H1 (cell line): ENCODE measurements at regions of chr3 and their contacts with region 1.

Region 1: GRCh38 chr3:56988458-56989168 is 71.9 kb upstream of the SPATA12 start:
- DNase-seq: peak; percentile 36 to 88
- H3K4me3 ChIP-seq: 0 out of 8 replicates have a peak overlapping the region, but pooled peaks of 1 of the 4 experiments have one; percentile 14
- H3K27ac ChIP-seq: no peak overlapping the region
- H3K4me1 ChIP-seq: peaks cover 0 to 12% (median 3%) of the 10 kb centered on the region in 4 experiments; a peak in 5 of 7 replicates
- H3K27me3 ChIP-seq: no peaks in the 10 kb centered on the region
- CTCF ChIP-seq: peak; percentile 47 to 89 (median 69)
- EP300 ChIP-seq: no peak
- POLR2A ChIP-seq: no peak
- RAD21 ChIP-seq: peak; percentile 96 to 97

Region 2: DNA sequence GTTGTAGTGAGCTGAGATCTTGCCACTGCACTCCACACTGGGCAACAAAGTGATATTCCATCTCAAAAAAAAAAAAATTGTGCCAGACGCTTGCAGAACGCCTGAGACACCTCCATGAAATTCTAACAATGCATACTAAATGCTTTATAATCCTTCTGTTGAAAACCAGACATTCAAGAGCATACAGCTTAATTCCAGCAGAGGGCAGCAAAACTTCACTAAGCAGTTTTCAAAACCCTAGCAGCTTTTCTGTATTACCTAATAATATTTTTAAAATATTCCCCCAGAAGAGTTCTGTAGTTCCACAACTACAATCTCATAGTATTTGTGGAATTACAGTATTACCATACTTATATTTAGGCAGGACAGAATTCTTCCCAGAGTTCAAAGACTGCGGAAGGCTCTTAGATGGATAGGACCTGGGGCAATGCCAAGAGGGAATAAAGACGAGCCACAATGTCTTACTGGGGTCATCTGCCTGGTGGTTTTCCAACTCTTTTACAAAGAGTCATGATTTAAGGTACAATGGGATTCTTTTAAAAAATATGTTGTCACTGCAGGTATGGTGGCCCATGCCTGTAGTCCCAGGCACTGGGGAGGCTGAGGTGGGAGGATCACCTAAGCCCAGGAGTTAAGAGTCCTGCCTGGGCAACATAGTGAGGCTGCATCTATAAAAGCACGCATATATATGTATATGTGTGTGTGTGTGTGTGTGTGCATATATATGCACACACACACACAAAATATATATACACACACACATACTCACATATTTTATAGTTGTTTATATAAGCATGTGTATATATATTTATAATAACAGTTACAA is 285.9 kb before region 1 on chr3:
- CTCF ChIA-PET with region 1: interaction called, 178 read pairs
- POLR2A ChIA-PET with region 1: no interaction called
- DNase-seq: no peak
- H3K4me3 ChIP-seq: no peak overlapping the region
- H3K27ac ChIP-seq: no peak overlapping the region
- H3K4me1 ChIP-seq: no peaks in the 10 kb centered on the region
- H3K27me3 ChIP-seq: no peaks in the 10 kb centered on the region
- CTCF ChIP-seq: peak in 2 of 3 experiments; percentile 56 to 68; a peak in 2 of 4 replicates
- EP300 ChIP-seq: no peak
- POLR2A ChIP-seq: no peak
- RAD21 ChIP-seq: peak; percentile 88

Region 3: DNA sequence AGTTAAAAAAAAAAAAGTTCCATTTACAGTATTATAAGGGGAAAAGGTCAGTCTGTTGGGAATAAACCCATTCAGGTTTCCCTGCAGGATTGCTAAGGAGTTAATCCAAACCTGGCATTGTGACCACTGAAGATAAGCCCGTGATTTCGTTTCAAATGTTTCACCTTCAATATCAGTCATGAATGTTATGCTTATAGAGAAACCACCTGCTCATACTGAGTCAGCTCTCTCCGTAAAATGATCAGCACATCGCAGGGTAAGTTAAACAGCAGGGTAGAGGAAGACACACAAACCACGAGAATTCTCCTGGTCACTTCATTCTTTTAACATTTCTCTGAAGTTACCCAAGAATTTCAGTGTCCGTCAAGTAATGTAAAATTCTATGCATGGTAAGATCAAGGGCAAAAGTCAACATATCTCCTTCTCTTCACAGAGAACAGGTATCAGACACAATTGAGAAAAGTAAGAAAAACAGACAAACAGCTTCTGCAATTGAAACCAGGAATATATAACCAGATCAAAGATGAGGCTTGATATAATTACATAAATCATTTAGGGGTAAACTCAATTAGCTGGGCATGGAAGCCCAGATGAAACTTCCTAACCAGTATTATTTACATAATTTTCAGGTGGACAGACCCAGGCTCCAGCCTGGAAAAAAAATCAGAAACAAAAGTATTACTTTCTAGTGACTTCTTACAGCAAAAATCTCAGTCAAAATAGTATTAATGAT is 119.3 kb before region 1 on chr3:
- CTCF ChIA-PET with region 1: interaction called, 13 read pairs
- POLR2A ChIA-PET with region 1: no interaction called
- DNase-seq: no peak
- H3K4me3 ChIP-seq: no peak overlapping the region
- H3K27ac ChIP-seq: no peak overlapping the region
- H3K4me1 ChIP-seq: peaks cover 0 to 2% (median 0%) of the 10 kb centered on the region in 4 experiments; a peak in 1 of 7 replicates
- H3K27me3 ChIP-seq: no peaks in the 10 kb centered on the region
- CTCF ChIP-seq: no peak
- EP300 ChIP-seq: no peak
- POLR2A ChIP-seq: no peak
- RAD21 ChIP-seq: no peak

Region 4: DNA sequence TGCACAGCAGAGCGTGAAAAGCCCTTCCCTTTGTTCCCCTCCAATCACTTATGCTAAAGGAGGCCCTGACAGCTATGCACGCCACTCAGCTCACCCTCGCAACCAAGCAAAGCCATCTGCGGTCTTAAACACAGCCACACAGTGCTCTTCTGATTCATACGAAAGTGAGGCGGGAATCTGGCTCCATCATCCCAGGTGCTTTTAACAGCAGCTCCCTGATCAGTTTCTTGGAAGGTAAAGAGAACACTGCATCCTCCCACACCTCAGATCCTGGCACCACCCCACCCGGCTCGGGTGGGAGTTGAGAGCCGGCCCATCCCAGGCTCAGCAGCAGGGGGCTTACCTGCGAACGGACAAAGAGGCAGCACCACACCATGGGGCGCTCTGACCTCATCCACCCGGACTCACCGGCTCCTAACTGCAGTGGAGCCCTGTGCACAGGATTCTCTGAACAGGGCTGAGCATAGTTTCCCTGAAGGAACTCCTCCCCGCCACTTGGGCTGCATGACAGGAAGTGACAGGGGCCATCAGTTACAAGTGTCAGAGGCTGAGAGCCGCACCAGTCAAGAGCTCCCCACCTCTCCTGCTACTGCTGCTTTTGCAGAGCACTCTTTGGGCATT is 72.5 kb before region 1 on chr3:
- CTCF ChIA-PET with region 1: interaction called, 14 read pairs
- POLR2A ChIA-PET with region 1: no interaction called
- DNase-seq: no peak
- H3K4me3 ChIP-seq: no peak overlapping the region
- H3K27ac ChIP-seq: no peak overlapping the region
- H3K4me1 ChIP-seq: peaks cover 5 to 9% (median 7%) of the 10 kb centered on the region in 4 experiments; a peak in 6 of 7 replicates
- H3K27me3 ChIP-seq: no peaks in the 10 kb centered on the region; a peak in 1 of 7 replicates
- CTCF ChIP-seq: no peak
- EP300 ChIP-seq: no peak
- POLR2A ChIP-seq: no peak
- RAD21 ChIP-seq: no peak

Region 5: DNA sequence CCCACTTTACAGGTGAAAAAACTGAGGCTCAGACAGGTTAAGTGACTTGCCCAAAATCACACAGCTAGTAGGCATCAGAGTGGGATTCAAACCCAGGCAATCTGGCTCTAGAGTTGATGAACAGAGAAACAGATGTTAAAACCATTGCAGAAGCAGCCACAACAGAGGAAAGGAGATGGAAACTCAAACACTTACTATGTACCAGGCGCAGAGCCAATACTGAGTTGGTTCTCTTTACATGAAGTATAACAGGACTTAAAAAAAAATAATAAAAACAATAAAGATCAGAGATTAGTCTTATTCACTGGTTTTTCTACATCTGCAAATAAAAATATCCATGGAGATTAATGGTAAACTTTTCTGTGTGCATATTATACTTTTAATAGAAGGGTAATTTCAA is 13.0 kb before region 1 on chr3:
- CTCF ChIA-PET with region 1: interaction called, 34 read pairs
- POLR2A ChIA-PET with region 1: interaction called, 3 read pairs
- DNase-seq: no peak
- H3K4me3 ChIP-seq: no peak overlapping the region
- H3K27ac ChIP-seq: no peak overlapping the region
- H3K4me1 ChIP-seq: no peaks in the 10 kb centered on the region
- H3K27me3 ChIP-seq: no peaks in the 10 kb centered on the region
- CTCF ChIP-seq: no peak
- EP300 ChIP-seq: no peak
- POLR2A ChIP-seq: no peak
- RAD21 ChIP-seq: no peak

Region 6: DNA sequence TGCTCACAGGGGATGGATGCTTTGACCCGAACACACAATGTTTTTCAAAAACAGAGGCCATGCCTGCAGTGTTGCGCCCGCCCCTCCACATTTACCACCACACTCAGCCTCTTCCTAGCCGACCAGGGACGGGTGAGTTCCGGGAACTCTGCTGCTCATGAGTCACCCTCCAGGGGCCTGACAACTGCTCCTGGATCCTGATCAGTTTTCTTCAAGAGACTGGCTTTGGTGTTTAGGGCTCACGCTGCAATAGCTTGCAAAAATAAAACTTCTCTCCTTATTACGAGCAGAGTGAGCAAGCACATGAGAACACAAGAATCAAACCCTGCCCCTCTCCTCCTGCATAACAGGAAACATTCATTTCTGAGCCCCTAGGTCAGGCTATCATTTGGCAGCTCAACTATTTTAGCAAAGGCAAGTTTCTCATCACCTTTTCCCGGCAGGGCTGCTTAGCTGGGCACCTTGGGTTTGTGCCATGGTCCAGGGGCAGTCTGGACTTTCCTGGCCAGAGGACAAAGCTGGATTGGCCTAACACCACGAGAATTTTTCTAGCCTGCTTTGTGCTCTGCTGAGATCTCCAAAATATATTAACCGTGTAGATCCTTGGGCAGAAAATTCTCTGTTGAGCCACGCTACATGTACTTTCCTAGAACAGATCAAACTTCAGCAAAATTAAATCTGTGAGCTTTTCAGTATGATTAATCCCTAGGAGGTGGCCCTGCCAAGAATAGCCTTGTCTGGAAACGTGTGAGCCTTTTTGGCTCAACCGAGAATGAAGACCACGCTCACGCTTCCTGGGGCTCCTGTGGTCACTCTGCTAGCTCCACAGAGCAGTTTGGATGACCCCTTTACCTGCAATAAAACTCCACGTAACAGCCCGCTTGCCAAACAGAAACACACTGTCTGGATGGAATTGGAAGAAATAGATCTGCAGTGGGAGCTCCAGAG is 19.2 kb after region 1 on chr3:
- CTCF ChIA-PET with region 1: interaction called, 19 read pairs
- POLR2A ChIA-PET with region 1: no interaction called
- DNase-seq: no peak
- H3K4me3 ChIP-seq: no peak overlapping the region
- H3K27ac ChIP-seq: no peak overlapping the region
- H3K4me1 ChIP-seq: peaks cover 2 to 8% (median 4%) of the 10 kb centered on the region in 4 experiments; a peak in 3 of 7 replicates
- H3K27me3 ChIP-seq: no peaks in the 10 kb centered on the region
- CTCF ChIP-seq: no peak
- EP300 ChIP-seq: no peak
- POLR2A ChIP-seq: no peak
- RAD21 ChIP-seq: no peak

Region 7: GRCh38 chr3:57078635-57079473 is 90.2 kb after region 1 on chr3:
- CTCF ChIA-PET with region 1: interaction called, 10 read pairs
- POLR2A ChIA-PET with region 1: no interaction called
- DNase-seq: peak in 1 of 2 experiments; percentile 89
- H3K4me3 ChIP-seq: peak overlapping the region; percentile 58 to 96 (median 82)
- H3K27ac ChIP-seq: no peak overlapping the region
- H3K4me1 ChIP-seq: peaks cover 4 to 7% (median 5%) of the 10 kb centered on the region in 4 experiments; a peak in 5 of 7 replicates
- H3K27me3 ChIP-seq: peaks cover 0 to 34% (median 27%) of the 10 kb centered on the region in 4 experiments; a peak in 6 of 7 replicates
- CTCF ChIP-seq: peak; percentile 11 to 26 (median 14)
- EP300 ChIP-seq: no peak
- POLR2A ChIP-seq: peak in 1 of 2 experiments; percentile 32; a peak in 1 of 3 replicates
- RAD21 ChIP-seq: peak in 1 of 2 experiments; percentile 21; a peak in 1 of 4 replicates

Region 8: GRCh38 chr3:57120040-57120439 is 131.4 kb after region 1 on chr3:
- CTCF ChIA-PET with region 1: no interaction called
- POLR2A ChIA-PET with region 1: no interaction called
- DNase-seq: no peak
- H3K4me3 ChIP-seq: no peak overlapping the region
- H3K27ac ChIP-seq: no peak overlapping the region
- H3K4me1 ChIP-seq: peaks cover 0 to 10% (median 6%) of the 10 kb centered on the region in 4 experiments; a peak in 5 of 7 replicates
- H3K27me3 ChIP-seq: peaks cover 0 to 15% (median 11%) of the 10 kb centered on the region in 4 experiments; a peak in 5 of 7 replicates
- CTCF ChIP-seq: no peak
- EP300 ChIP-seq: no peak
- POLR2A ChIP-seq: no peak
- RAD21 ChIP-seq: no peak